ENCODE measurements at regions of chr3 and their contacts with region 1.

Region 1: GRCh38 chr3:119559441-119559963 is at the start of gene CD80:
- DNase-seq: peak; percentile 87
- H3K4me3 Mint-ChIP-seq: peak within 1 kb of the TSS; percentile 70
- H3K27ac Mint-ChIP-seq: peak within 1 kb of the TSS; percentile 80
- H3K4me1 Mint-ChIP-seq: peaks cover 70% of the 10 kb centered on the region
- H3K27me3 Mint-ChIP-seq: no peaks in the 10 kb centered on the region
- total RNA-seq, gene CD80: 27.1 to 29.5 TPM

Region 2: DNA sequence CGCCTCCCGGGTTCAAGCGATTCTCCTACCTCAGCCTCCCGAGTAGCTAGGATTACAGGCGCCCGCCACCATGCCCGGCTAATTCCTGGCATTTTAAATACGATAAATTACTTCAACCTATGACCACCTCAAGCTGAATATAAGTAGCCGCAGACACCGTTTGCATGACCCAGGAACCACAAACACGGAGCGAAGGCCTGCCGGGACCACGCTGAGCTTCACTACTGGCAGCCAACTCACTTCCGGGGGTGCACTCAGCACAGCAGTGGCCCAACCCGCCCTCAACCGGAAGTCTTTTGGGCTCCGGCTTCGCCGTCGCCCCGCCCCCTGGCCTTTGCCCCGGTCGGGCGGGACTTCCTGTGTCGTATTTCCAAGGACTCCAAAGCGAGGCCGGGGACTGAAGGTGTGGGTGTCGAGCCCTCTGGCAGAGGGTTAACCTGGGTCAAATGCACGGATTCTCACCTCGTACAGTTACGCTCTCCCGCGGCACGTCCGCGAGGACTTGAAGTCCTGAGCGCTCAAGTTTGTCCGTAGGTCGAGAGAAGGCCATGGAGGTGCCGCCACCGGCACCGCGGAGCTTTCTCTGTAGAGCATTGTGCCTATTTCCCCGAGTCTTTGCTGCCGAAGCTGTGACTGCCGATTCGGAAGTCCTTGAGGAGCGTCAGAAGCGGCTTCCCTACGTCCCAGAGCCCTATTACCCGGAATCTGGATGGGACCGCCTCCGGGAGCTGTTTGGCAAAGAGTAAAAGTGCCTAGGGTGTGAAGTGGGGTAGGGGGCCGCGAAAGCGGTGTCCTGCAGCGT is 61.1 kb before region 1 on chr3 and contains the start of gene TIMMDC1:
- CTCF ChIA-PET with region 1: interaction called, 9 read pairs
- POLR2A ChIA-PET with region 1: interaction called, 32 read pairs
- DNase-seq: peak; percentile 98
- H3K4me3 Mint-ChIP-seq: peak within 1 kb of the TSS; percentile 99
- H3K27ac Mint-ChIP-seq: peak within 1 kb of the TSS; percentile 96
- H3K4me1 Mint-ChIP-seq: peaks cover 45% of the 10 kb centered on the region
- H3K27me3 Mint-ChIP-seq: no peaks in the 10 kb centered on the region
- total RNA-seq, gene TIMMDC1: 66.4 to 67.4 TPM

Region 3: GRCh38 chr3:119579366-119580165 is 20.1 kb after region 1 on chr3 and contains the start of gene ADPRH:
- CTCF ChIA-PET with region 1: interaction called, 21 read pairs
- POLR2A ChIA-PET with region 1: interaction called, 31 read pairs
- DNase-seq: peak; percentile 68
- H3K4me3 Mint-ChIP-seq: peak within 1 kb of the TSS; percentile 87
- H3K27ac Mint-ChIP-seq: peak within 1 kb of the TSS; percentile 83
- H3K4me1 Mint-ChIP-seq: peaks cover 35% of the 10 kb centered on the region
- H3K27me3 Mint-ChIP-seq: no peaks in the 10 kb centered on the region
- total RNA-seq, gene ADPRH: 8.6 to 8.8 TPM

Region 4: GRCh38 chr3:119600732-119601131 is 41.2 kb after region 1 on chr3:
- CTCF ChIA-PET with region 1: interaction called, 7 read pairs
- POLR2A ChIA-PET with region 1: interaction called, 18 read pairs
- DNase-seq: peak; percentile 60
- H3K4me3 Mint-ChIP-seq: no peak overlapping the region
- H3K27ac Mint-ChIP-seq: peak overlapping the region; percentile 62
- H3K4me1 Mint-ChIP-seq: peaks cover 56% of the 10 kb centered on the region
- H3K27me3 Mint-ChIP-seq: no peaks in the 10 kb centered on the region

Region 5: DNA sequence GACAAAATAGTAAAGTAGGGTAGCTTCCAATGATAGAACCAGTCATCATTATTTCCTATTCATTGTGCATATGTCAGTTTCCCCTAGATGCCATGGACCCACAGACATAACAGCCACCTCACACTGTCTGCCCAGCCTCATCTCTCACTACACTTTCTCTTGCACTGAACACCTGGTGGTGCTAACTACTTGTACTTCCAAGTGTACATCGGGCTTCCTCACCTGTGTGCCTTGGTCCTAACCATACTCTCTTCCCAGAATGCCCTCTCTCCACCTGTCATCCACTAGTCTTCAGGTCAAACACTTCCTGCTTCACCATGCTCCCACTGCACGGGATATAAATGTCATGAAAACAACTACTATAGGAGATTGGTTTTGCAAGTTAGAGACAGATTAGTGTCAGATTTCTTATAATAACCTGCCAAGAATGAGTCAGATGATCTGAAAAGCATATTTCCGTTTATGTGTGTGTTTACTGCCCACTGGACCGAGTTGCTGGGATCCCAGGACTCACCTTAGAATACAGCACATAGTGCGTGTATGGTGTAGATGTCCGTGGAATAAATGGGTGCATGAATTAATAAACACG is 59.5 kb after region 1 on chr3:
- CTCF ChIA-PET with region 1: no interaction called
- POLR2A ChIA-PET with region 1: no interaction called
- DNase-seq: no peak
- H3K4me3 Mint-ChIP-seq: no peak overlapping the region
- H3K27ac Mint-ChIP-seq: no peak overlapping the region
- H3K4me1 Mint-ChIP-seq: peaks cover 4% of the 10 kb centered on the region
- H3K27me3 Mint-ChIP-seq: peaks cover 8% of the 10 kb centered on the region